ENCODE measurements at regions of chr10 and their contacts with region 1.

Region 1: GRCh38 chr10:126160971-126161659 is 227.2 kb downstream of the ADAM12 start:
- DNase-seq: no peak
- H3K4me3 ChIP-seq: no peak overlapping the region
- H3K27ac ChIP-seq: no peak overlapping the region
- H3K4me1 ChIP-seq: peaks cover under 1 to 14% (median 9%) of the 10 kb centered on the region in 4 experiments; a peak in 5 of 7 replicates
- H3K27me3 ChIP-seq: no peaks in the 10 kb centered on the region; a peak in 1 of 7 replicates
- CTCF ChIP-seq: peak; percentile 49 to 73 (median 72)
- EP300 ChIP-seq: no peak
- POLR2A ChIP-seq: no peak
- RAD21 ChIP-seq: peak; percentile 81 to 90

Region 2: DNA sequence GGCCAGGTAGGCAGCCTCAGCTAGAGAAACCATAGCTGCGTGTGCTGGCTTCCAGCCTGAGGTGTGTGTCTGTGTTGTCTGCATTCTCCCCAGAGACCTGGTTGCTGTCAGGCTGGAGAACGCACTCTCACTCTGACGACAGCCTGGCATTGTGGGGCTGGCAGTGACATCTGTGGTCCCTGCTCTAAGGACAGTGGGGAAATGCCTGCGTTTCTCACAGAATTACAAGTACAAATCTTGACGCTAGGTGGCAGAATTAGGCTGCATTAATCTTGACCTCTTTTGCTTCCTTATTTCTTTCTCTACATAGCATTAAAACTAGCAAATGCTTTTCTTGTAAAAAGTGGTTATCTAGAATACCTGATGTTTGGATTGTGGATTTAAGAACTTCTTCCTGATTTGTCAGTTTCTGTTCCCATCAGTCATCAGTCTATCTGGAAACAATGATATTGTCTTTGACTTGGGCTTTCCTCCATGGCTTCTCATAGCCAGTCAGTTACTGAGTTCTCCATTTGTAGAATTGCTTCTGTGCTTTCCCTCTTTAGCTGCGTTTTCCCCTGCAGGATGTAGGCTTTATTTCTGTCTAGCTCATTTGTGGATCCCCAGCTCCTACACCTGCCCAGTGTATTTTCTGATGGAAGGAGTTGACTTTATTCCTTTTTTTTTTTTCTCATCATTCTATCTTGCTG is 178.7 kb before region 1 on chr10:
- CTCF ChIA-PET with region 1: interaction called, 19 read pairs
- POLR2A ChIA-PET with region 1: no interaction called
- DNase-seq: peak in 1 of 2 experiments; percentile 23
- H3K4me3 ChIP-seq: no peak overlapping the region
- H3K27ac ChIP-seq: no peak overlapping the region
- H3K4me1 ChIP-seq: peaks cover 0 to 15% (median 1%) of the 10 kb centered on the region in 4 experiments; a peak in 4 of 7 replicates
- H3K27me3 ChIP-seq: no peaks in the 10 kb centered on the region
- CTCF ChIP-seq: peak in 2 of 3 experiments; percentile 59 to 68; a peak in 3 of 4 replicates
- EP300 ChIP-seq: no peak
- POLR2A ChIP-seq: no peak
- RAD21 ChIP-seq: peak; percentile 84 to 88

Region 3: DNA sequence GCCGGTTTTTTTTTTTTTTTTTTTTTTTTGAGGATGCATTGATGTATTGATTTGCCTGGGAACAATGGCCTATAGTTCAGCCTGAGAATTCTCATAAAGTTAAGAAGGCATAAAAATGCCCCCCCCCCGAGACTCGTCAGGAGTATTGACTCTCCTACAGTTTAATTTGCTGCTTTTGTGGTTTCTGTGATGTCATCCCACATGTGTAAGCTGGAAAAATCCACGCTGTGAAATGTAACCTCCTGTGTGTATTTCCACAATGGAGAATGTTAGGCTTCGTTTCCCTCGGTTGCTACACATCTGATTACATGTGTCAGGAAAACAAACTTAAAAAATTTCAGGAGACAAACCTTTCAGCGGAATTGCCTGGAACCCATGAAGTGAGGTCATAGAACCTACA is 146.8 kb before region 1 on chr10:
- CTCF ChIA-PET with region 1: no interaction called
- POLR2A ChIA-PET with region 1: no interaction called
- DNase-seq: no peak
- H3K4me3 ChIP-seq: no peak overlapping the region
- H3K27ac ChIP-seq: no peak overlapping the region
- H3K4me1 ChIP-seq: no peaks in the 10 kb centered on the region; a peak in 1 of 7 replicates
- H3K27me3 ChIP-seq: no peaks in the 10 kb centered on the region
- CTCF ChIP-seq: no peak
- EP300 ChIP-seq: no peak
- POLR2A ChIP-seq: no peak
- RAD21 ChIP-seq: no peak

Region 4: DNA sequence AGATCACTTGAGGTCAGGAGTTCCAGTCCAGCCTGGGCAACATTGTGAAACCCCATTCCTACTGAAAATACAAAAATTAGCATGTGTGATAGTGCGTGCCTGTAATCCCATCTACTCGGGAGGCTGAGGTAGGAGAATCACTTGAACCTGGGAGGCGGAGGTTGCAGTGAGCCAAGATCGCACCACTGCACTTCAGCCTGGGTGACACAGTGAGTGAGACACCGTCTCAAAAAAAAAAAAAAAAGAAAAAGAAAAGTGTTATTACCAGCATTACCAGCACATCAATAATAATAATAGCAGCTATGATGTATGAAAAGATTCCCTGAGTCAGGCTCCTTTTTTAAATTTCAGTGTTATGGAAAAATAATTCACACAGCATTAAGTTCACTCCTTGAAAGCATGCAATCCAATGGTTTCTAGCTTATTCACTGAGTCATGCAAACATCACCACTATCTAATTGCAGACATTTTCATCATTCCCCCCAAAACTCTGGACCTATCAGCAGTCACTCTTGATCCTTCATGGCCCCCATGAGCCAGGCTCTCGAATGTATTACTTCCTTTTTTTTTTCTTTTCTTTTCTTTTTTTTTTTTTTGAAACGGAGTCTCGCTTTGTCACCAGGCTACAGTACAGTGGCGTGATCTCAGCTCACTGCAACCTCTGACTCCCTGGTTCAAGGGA is 36.3 kb before region 1 on chr10:
- CTCF ChIA-PET with region 1: no interaction called
- POLR2A ChIA-PET with region 1: no interaction called
- DNase-seq: no peak
- H3K4me3 ChIP-seq: no peak overlapping the region
- H3K27ac ChIP-seq: no peak overlapping the region
- H3K4me1 ChIP-seq: peaks cover 0 to 7% (median 3%) of the 10 kb centered on the region in 4 experiments; a peak in 4 of 7 replicates
- H3K27me3 ChIP-seq: peaks cover 0 to 2% (median 0%) of the 10 kb centered on the region in 4 experiments; a peak in 3 of 7 replicates
- CTCF ChIP-seq: no peak
- EP300 ChIP-seq: no peak
- POLR2A ChIP-seq: no peak
- RAD21 ChIP-seq: no peak

Region 5: DNA sequence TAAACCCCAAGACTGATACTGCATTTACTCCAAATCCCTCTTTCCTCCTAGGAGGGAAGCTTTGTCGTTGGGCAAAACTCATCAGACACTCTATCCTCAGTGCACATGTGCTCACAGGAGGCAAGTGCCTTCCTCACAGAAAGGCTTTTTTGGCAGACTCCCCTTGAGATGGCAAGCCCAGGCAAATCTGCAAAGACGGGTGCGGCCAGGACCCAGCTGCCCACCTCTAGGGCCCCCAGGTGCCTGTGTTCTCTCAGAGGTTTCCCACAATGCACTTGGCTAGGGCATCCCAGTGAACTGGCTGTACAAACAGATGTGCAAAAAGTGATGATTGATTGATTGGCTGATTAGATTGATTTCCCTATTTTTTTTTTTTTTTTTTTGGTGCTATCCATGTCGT is 124.5 kb after region 1 on chr10:
- CTCF ChIA-PET with region 1: no interaction called
- POLR2A ChIA-PET with region 1: no interaction called
- DNase-seq: no peak
- H3K4me3 ChIP-seq: no peak overlapping the region
- H3K27ac ChIP-seq: no peak overlapping the region
- H3K4me1 ChIP-seq: no peaks in the 10 kb centered on the region
- H3K27me3 ChIP-seq: no peaks in the 10 kb centered on the region
- CTCF ChIP-seq: no peak
- EP300 ChIP-seq: no peak
- POLR2A ChIP-seq: no peak
- RAD21 ChIP-seq: no peak

Measured in H1 (cell line).